ENCODE measurements at regions of chr19 and their contacts with region 1.

Region 1: DNA sequence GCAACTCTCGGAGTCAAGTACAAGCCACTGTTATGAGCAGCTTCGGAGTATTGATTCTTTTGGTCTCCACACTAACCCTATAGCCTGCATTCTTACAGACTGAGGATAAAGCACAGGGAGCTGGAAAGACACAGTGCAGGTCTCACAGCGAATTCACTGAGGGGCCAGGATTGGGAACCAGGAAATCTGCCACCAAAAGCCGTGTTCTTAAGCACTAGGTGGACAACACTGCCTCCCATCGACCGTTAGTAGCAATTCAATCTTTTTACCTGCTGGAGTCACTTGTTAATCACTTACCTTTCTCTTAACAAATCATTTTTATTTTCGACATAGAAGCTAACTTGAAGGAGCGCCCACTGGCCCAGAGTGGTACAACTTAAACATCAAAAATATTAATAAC is 6.3 kb downstream of the PMIS2 start:
- H3K4me3 ChIP-seq: no peak overlapping the region
- H3K27ac ChIP-seq: no peak overlapping the region
- H3K4me1 ChIP-seq: 0 out of 2 replicates have a peak, but pooled peaks cover 2% of the 10 kb centered on the region
- CTCF ChIP-seq: 0 out of 2 replicates have a peak, but pooled peaks have one; percentile 34

Region 2: DNA sequence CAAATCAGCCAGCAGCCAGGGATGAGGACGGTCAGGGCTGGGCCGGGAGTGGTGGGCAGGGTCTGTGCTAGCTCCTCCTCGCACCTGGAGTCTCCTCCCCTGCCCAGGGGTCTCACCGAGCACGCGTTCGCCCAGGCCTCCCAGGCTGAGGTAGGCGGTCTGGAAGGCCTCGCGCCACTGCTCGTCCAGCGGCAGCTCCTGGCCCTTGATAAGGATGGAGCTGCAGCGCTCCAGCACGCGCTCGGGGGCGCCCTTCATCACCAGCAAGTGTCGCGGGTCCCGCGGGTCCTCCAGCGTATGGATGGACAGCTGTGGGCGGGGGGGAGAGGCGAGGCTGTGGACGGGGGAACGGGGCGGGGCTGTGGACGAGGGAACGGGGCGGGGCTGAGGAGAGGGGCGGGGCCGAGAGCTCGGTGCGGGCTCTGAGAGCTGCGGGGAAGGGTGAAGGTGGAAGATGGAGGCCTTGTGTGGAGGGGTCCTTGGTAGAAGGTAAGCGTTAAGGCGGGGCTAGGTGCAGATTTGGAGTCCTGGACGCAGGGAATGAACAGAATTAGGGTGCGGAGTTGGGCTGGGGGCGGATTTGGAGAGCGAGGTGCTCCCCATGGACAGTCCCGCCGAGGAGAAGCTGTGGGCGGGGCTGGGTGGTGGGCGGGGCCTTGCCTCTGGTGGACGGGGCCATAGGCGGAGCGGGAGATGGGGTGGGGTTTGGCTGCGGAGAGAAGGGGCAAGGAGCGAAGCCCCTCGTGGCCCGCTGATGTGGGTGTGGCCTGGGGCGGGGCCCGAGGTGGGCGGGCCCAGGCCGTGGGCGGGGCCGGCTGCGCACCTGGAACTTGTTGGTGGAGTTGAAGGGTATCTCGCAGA is 34.5 kb before region 1 on chr19:
- CTCF ChIA-PET with region 1: interaction called, 18 read pairs
- POLR2A ChIA-PET with region 1: interaction called, 4 read pairs
- H3K4me3 ChIP-seq: peak overlapping the region; percentile 22
- H3K27ac ChIP-seq: no peak overlapping the region
- H3K4me1 ChIP-seq: peaks cover 10% of the 10 kb centered on the region
- CTCF ChIP-seq: no peak

Region 3: DNA sequence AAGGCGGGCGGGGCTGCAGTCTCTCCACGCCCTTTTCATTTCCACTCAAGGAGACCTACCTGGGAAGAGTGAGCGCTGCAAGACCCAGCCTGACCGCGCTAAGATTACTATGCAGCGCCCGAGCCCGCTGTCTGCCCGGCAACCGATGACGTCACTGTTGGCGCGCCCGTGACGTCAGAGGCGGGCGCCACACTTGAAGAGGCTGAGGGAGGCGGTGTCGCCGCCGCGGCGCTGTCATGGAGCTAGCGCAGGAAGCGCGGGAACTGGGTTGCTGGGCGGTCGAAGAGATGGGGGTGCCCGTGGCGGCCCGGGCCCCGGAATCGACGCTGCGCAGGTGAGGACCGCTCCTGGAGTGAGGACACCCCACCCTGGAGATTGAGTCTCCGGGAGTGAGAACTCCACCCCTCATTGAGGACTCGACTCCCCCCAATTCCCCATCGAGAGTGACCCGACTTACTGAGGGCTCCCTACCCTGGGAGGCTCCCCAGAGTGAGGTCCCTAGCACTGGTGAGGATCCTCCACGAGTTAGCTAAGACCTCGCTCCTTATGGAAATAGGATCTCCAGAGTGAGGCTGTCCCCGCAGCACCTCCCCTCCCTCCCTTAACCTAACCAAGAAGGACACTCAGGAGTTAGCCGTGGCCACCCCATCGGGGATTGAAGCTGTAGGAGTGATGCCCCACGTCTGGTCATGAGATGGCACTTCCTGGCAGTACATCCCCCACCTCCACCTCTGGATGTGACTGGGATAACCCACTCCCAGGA is 20.5 kb after region 1 on chr19 and contains the start of gene HAUS5:
- CTCF ChIA-PET with region 1: interaction called, 13 read pairs
- POLR2A ChIA-PET with region 1: interaction called, 3 read pairs
- H3K4me3 ChIP-seq: peak within 1 kb of the TSS; percentile 68
- H3K27ac ChIP-seq: peak within 1 kb of the TSS; percentile 94
- H3K4me1 ChIP-seq: peaks cover 13% of the 10 kb centered on the region
- CTCF ChIP-seq: peak; percentile 88

Region 4: DNA sequence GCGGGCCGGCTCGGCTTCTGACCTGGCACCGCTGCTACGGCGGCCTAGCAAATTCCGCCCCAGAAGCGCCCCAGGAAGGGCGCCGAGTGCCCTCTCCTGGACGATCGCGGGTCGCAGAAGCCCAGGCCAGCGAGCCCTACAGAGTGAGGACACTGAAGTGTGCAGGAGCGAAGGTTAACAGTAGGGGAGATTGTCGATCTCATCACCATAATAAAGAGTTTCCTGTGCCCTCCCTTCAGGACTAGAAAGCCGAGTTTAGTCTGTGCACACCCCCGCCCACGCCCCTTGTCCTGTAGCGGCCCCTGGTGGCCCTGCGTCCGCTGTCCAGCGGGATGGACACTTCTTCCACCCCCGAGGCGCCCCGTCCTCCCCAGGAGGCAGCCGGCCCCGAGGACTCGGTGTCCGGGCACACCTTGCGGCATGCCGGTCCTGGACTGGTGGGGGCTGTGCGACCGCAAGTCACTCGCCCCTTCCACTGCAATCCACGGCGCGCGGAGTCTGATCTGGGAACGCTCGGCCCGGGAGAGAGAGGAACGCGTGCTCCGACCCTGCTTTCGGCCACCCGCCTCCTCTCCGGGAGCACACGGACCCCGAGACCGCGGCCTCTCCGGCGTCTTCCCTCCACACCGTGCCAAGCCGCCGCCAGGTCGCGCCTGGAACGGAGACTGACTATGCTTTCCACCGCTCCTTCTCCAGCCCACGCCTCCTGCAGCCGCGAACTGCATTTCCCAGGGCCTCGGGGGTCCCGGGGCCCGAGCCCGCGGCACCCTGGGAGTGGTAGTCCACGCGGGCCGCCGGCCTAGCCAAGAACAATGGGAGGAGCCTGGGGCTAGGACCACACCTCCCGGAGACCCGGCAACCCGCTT is 124.8 kb after region 1 on chr19:
- CTCF ChIA-PET with region 1: interaction called, 12 read pairs
- POLR2A ChIA-PET with region 1: no interaction called
- H3K4me3 ChIP-seq: peak overlapping the region; percentile 44
- H3K27ac ChIP-seq: peak overlapping the region; percentile 93
- H3K4me1 ChIP-seq: peaks cover 23% of the 10 kb centered on the region
- CTCF ChIP-seq: peak; percentile 100

Measured in HEK293 (cell line).